WTC11 (cell line): ENCODE measurements at regions of chr19 and their contacts with region 1.

Region 1: GRCh38 chr19:8412783-8413628 is at the start of gene MARCHF2:
- DNase-seq: peak; percentile 96
- ATAC-seq: peak; percentile 99
- H3K4me3 Mint-ChIP-seq: peak within 1 kb of the TSS; percentile 59
- H3K27ac Mint-ChIP-seq: no peak within 1 kb of the TSS
- H3K4me1 Mint-ChIP-seq: peaks cover 4% of the 10 kb centered on the region
- H3K27me3 Mint-ChIP-seq: peaks cover 2% of the 10 kb centered on the region; the same call in 1 of the 2 replicates
- CTCF ChIP-seq: no peak; the same call in 1 of the 2 replicates
- total RNA-seq, gene MARCHF2: 20.2 to 30.4 TPM (median 27.5 TPM) in 3 replicates

Region 2: DNA sequence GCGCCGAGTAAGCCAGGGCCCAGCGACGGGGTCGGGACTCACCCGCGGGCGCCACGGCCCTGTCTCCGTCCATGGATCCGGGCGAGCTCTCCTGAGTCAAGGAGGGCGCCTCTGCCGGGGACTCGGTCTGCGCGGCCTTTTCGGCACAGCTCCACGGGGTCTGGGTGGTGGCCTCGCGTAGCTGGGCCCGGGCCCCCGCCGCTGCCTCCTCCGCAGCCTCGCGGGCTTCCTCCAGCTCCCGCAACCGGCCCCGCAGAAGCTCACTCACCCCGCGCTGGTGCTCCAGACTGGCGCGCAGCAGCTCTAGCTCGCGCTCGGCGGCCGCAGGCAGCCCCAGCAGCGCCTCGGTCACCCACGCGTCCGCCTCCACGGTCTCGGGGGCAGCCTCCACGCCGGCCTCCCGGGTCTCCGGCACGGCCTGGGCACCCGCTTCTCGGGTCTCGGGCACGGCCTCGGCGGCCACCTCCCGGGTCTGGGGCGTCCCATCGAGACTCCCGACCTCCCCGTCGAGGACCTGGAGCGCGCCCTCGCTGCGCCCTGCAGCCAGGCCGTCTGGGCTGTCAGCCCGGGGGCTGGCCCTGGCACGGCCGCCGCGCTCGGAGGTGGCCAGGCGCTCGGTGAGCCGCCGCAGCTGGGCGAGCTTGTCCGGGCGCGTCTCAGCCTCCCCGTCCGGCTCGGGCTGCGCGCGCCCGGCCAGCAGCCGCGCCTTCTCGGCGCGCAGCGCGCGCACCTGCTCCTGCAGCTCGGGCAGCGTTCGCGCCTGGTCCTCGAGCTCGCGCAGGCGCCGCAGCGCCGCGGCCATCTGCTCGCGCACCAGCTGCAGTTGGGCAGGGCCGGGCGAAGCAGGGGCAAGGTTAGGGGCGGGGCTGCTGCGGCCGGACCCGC is 78.3 kb before region 1 on chr19:
- CTCF ChIA-PET with region 1: interaction called, 24 read pairs
- POLR2A ChIA-PET with region 1: no interaction called
- DNase-seq: peak; percentile 78
- ATAC-seq: peak; percentile 53
- H3K4me3 Mint-ChIP-seq: peak overlapping the region; percentile 70
- H3K27ac Mint-ChIP-seq: no peak overlapping the region
- H3K4me1 Mint-ChIP-seq: peaks cover 19% of the 10 kb centered on the region
- H3K27me3 Mint-ChIP-seq: peaks cover 75% of the 10 kb centered on the region
- CTCF ChIP-seq: no peak

Region 3: DNA sequence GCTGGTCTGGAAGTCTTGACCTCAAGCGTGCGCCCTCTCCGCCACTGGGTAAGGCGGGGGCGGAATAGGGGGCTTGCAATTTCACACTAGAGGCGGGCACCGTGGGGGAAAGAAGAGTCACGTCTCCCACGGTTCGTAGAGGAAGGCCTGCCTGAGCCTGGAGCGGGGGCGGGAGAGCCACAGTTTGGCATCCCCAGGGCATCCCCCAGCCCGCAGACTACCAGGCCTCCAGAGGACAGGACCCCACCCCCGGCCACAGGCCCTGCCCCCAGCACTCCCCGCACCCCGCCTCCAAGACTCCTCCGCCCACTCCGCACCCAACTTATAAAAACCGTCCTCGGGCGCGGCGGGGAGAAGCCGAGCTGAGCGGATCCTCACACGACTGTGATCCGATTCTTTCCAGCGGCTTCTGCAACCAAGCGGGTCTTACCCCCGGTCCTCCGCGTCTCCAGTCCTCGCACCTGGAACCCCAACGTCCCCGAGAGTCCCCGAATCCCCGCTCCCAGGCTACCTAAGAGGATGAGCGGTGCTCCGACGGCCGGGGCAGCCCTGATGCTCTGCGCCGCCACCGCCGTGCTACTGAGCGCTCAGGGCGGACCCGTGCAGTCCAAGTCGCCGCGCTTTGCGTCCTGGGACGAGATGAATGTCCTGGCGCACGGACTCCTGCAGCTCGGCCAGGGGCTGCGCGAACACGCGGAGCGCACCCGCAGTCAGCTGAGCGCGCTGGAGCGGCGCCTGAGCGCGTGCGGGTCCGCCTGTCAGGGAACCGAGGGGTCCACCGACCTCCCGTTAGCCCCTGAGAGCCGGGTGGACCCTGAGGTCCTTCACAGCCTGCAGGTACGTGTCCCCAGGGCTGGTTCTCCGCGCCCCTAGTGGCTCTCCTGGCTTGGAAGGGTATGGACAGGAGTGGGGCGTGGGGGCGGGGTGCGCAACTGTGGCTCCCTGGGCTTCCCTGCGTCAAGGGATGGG is 48.9 kb before region 1 on chr19 and contains the start of gene ANGPTL4:
- CTCF ChIA-PET with region 1: interaction called, 10 read pairs
- POLR2A ChIA-PET with region 1: no interaction called
- DNase-seq: peak; percentile 68
- ATAC-seq: peak; percentile 77
- H3K4me3 Mint-ChIP-seq: peak within 1 kb of the TSS; percentile 75
- H3K27ac Mint-ChIP-seq: no peak within 1 kb of the TSS
- H3K4me1 Mint-ChIP-seq: peaks cover 24% of the 10 kb centered on the region
- H3K27me3 Mint-ChIP-seq: peaks cover 69% of the 10 kb centered on the region
- CTCF ChIP-seq: no peak
- total RNA-seq, gene ANGPTL4: 1.0 to 2.7 TPM (median 2.2 TPM) in 3 replicates

Region 4: DNA sequence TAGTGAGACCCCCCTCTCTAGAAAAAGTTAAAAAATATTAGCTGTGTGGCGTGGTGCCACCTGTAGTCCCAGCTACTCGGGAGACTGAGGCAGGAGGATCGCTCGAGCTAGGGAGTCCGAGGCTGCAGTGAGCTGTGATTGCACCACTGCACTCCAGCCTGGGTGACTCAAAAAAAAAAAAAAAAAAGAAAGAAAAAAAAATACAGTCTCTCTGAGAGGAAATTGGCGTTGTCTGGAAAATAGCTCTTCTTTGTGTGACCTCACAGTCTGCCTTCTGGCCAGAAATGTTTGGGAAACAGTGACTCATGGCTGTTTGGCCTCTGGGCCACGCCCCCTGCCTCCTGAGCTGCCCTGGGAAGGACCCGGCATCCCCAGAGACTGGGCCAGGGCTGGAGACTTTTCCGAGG is 10.8 kb after region 1 on chr19:
- CTCF ChIA-PET with region 1: interaction called, 58 read pairs
- POLR2A ChIA-PET with region 1: interaction called, 3 read pairs
- DNase-seq: no peak
- ATAC-seq: peak; percentile 71
- H3K4me3 Mint-ChIP-seq: no peak overlapping the region
- H3K27ac Mint-ChIP-seq: no peak overlapping the region; the same call in 1 of the 2 replicates
- H3K4me1 Mint-ChIP-seq: no peaks in the 10 kb centered on the region
- H3K27me3 Mint-ChIP-seq: no peaks in the 10 kb centered on the region
- CTCF ChIP-seq: no peak

Region 5: GRCh38 chr19:8444645-8445487 is 31.9 kb after region 1 on chr19 and contains the start of gene HNRNPM:
- CTCF ChIA-PET with region 1: interaction called, 38 read pairs
- POLR2A ChIA-PET with region 1: interaction called, 8 read pairs
- DNase-seq: peak; percentile 100
- ATAC-seq: peak; percentile 84
- H3K4me3 Mint-ChIP-seq: peak within 1 kb of the TSS; percentile 84
- H3K27ac Mint-ChIP-seq: peak within 1 kb of the TSS; percentile 99
- H3K4me1 Mint-ChIP-seq: peaks cover 52% of the 10 kb centered on the region
- H3K27me3 Mint-ChIP-seq: no peaks in the 10 kb centered on the region
- CTCF ChIP-seq: no peak
- total RNA-seq, gene HNRNPM: 309 to 416 TPM (median 343 TPM) in 3 replicates

Region 6: DNA sequence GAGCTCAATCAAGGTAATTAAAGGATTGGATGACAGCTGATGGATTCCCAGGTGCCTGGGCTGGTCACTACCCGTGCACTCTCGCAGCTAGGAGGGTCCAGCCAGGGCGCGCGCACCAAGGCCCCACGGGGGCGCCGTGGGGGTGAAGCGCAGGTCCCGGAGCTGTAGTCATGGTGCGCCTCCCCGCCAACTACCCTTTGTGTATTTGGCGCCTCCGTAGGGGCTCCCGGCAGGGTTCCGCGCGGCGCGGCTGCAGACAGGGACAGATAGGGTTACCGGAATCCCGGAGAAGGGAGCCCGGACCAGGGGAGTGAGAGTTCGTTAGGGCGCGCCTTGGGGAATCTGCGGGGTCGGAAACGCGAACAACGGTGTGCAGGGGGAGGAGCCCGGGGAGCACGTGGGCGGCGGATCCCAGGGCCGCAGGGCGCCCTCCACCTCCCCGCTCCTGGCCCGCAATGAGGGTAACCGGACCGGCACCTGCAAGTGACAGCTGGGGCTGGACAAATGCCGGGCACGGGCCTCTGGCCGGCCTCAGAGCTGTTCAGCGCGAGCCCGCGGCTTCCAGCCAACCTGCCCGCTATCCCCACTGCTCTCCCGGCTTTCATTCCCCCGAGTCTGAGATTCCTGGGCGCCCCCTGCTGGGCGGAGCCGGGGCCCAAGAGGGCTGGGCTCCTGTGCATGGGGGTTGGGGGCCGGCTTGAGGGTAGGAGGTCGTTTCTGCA is 92.8 kb after region 1 on chr19:
- CTCF ChIA-PET with region 1: interaction called, 12 read pairs
- POLR2A ChIA-PET with region 1: no interaction called
- DNase-seq: peak; percentile 86
- ATAC-seq: peak; percentile 81
- H3K4me3 Mint-ChIP-seq: peak overlapping the region; percentile 84
- H3K27ac Mint-ChIP-seq: 0 out of 2 replicates have a peak overlapping the region, but pooled peaks have one; percentile 60
- H3K4me1 Mint-ChIP-seq: peaks cover 4% of the 10 kb centered on the region; the same call in 1 of the 2 replicates
- H3K27me3 Mint-ChIP-seq: peaks cover 4% of the 10 kb centered on the region; the same call in 1 of the 2 replicates
- CTCF ChIP-seq: peak; percentile 51

Region 7: DNA sequence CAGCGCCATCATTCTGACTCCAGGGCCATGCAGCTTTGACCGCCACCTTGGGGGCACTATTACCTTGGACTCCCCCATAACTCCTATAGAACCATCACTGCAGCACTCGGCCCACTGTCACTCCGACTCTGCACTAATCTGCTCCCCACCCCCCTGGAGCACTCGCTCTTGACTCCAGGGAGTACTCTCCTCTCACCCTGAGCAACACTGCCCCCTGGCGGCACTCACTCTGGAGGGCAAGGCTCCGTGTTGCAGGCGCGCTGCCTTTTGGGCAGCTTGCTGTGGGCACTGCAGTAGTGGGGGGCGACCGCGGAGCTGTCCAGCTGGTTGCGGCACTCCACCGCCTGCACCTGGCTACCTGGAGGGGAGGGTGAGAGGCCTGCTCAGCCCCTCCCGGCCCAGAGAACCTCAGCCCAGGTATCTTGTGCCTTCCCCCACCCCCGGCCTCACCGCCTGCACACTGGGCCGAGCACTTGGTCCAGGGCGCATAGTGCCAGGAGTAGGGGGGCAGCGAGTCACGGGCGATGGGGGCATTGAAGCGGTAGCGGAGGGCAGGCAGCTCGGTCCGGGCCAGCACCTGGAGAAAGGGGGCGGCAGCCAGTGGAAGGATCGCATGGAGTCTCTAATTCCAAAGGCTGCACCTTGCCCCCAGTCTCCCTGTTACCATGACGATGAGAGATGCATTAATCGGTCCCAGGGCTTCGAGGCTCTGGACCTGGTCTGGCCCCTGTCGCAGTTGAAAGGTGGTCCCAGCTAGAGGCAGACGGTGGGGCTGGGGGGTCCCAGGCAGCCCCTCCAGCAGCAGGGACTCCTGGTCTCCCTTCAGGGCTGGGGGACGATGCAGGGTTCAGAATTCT is 173.1 kb after region 1 on chr19:
- CTCF ChIA-PET with region 1: interaction called, 12 read pairs
- POLR2A ChIA-PET with region 1: no interaction called
- DNase-seq: peak; percentile 99
- ATAC-seq: peak; percentile 87
- H3K4me3 Mint-ChIP-seq: no peak overlapping the region
- H3K27ac Mint-ChIP-seq: no peak overlapping the region
- H3K4me1 Mint-ChIP-seq: peaks cover 4% of the 10 kb centered on the region; the same call in 1 of the 2 replicates
- H3K27me3 Mint-ChIP-seq: peaks cover 29% of the 10 kb centered on the region
- CTCF ChIP-seq: peak; percentile 93